Calu3 (cell line): ENCODE measurements at regions of chr9 and their contacts with region 1.

Region 1: DNA sequence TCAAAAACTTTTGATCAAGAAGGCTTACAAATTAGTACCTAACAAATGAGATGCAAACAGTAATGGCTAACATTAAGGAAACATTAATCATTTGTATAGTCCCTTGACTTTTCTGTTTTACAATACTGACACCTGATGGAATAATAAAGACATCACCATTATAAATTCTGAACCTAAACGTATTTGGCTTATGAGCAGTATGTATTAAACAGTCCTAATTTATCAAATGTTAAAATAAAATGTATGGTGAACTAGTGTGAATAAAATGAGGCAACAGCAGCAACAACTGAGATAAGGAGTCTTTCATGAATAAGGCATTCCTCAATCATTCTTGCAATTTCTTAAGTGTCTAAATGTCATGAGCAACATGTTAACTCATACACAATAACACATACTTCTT is 6.0 kb downstream of the PUM3 start:
- DNase-seq: no peak
- H3K4me3 Mint-ChIP-seq: peak overlapping the region; percentile 27
- H3K27ac Mint-ChIP-seq: no peak overlapping the region
- H3K4me1 Mint-ChIP-seq: peaks cover 22% of the 10 kb centered on the region
- H3K27me3 Mint-ChIP-seq: no peaks in the 10 kb centered on the region
- CTCF ChIP-seq: no peak

Region 2: GRCh38 chr9:2125906-2126305 is 712.0 kb before region 1 on chr9:
- CTCF ChIA-PET with region 1: no interaction called
- intact Hi-C with region 1: loop called (anchors 10 kb)
- DNase-seq: no peak
- H3K4me3 Mint-ChIP-seq: no peak overlapping the region
- H3K27ac Mint-ChIP-seq: no peak overlapping the region
- H3K4me1 Mint-ChIP-seq: no peaks in the 10 kb centered on the region
- H3K27me3 Mint-ChIP-seq: no peaks in the 10 kb centered on the region
- CTCF ChIP-seq: no peak

Region 3: GRCh38 chr9:2526071-2526828 is 311.7 kb before region 1 on chr9:
- CTCF ChIA-PET with region 1: no interaction called
- intact Hi-C with region 1: no loop called
- DNase-seq: no peak
- H3K4me3 Mint-ChIP-seq: no peak overlapping the region
- H3K27ac Mint-ChIP-seq: no peak overlapping the region
- H3K4me1 Mint-ChIP-seq: no peaks in the 10 kb centered on the region
- H3K27me3 Mint-ChIP-seq: no peaks in the 10 kb centered on the region
- CTCF ChIP-seq: no peak